ENCODE measurements at regions of chr6 and their contacts with region 1.

Region 1: GRCh38 chr6:44246663-44247337 is at the start of gene HSP90AB1:
- DNase-seq: peak; percentile 98
- H3K4me3 Mint-ChIP-seq: peak within 1 kb of the TSS; percentile 95
- H3K27ac Mint-ChIP-seq: peak within 1 kb of the TSS; percentile 99
- H3K4me1 Mint-ChIP-seq: peaks cover 35% of the 10 kb centered on the region
- H3K27me3 Mint-ChIP-seq: no peaks in the 10 kb centered on the region
- CTCF ChIP-seq: no peak
- total RNA-seq, gene HSP90AB1: 546 and 577 TPM in 2 replicates

Region 2: DNA sequence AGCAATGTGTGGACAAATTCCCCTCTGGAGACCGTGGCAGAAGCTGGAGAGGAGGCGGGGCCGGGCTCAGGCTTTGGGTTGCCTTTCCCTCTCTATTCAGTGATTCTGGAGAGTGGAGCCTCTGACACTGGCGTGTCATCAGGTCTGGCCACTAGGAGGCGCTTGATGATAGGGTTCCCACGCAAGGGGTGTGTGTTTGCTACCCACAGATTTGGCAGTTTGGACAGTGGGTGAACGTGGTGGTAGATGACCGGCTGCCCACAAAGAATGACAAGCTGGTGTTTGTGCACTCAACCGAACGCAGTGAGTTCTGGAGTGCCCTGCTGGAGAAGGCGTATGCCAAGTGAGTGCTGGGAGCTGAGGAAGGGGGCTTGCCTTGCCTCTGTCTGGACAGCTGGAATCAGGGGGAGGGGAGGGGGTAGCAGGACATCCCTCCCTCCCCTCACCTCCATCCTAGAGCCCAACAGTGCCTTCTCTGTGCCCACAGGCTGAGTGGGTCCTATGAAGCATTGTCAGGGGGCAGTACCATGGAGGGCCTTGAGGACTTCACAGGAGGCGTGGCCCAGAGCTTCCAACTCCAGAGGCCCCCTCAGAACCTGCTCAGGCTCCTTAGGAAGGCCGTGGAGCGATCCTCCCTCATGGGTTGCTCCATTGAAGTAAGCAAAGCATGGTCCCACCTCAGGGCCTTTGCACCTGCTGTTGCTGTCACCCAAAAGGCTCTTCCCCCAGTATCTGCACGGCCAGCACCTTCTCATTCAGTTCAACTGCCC is 73.9 kb before region 1 on chr6:
- CTCF ChIA-PET with region 1: interaction called, 10 read pairs
- POLR2A ChIA-PET with region 1: interaction called, 11 read pairs
- intact Hi-C with region 1: loop called (anchors 2 kb)
- DNase-seq: peak; percentile 84
- H3K4me3 Mint-ChIP-seq: no peak overlapping the region
- H3K27ac Mint-ChIP-seq: no peak overlapping the region
- H3K4me1 Mint-ChIP-seq: peaks cover 16% of the 10 kb centered on the region
- H3K27me3 Mint-ChIP-seq: no peaks in the 10 kb centered on the region
- CTCF ChIP-seq: peak; percentile 85

Region 3: DNA sequence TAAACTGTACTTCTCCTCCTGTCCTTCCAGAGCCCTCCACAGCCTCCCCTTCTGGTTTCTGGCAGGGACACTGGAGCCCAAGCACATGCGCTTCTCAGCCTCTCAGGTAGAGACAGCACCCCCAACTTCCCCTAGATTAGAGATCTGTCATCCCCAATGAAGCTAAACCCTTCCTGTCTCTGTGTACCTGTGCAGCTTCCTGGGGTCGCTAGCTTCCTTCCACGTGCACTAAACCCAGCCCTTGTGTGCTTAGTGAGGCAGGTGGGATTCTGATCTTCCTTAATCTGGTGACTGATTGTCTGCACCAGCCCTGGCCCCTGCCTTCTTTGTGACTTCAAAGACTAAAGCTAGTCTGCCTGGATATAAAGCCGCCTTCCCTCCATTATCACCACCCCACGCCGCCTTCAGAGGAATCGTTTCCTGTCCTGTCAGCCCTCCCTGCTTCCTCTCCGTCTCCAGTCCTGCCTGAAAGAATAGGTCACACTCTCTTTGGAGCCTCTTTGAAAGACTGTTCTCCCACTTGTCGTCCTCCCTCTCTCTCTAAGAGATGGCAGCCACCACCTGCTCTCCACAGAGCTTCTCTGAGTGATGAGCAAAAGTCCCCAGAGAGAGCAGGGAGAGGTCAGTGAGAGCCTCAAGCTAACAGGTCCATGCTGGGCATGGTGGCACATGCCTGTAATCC is 60.7 kb before region 1 on chr6:
- CTCF ChIA-PET with region 1: no interaction called
- POLR2A ChIA-PET with region 1: no interaction called
- intact Hi-C with region 1: no loop called
- DNase-seq: no peak
- H3K4me3 Mint-ChIP-seq: no peak overlapping the region
- H3K27ac Mint-ChIP-seq: no peak overlapping the region
- H3K4me1 Mint-ChIP-seq: no peaks in the 10 kb centered on the region
- H3K27me3 Mint-ChIP-seq: peaks cover 17% of the 10 kb centered on the region
- CTCF ChIP-seq: no peak

Region 4: GRCh38 chr6:44201638-44202303 is 45.0 kb before region 1 on chr6:
- CTCF ChIA-PET with region 1: interaction called, 5 read pairs
- POLR2A ChIA-PET with region 1: interaction called, 17 read pairs
- intact Hi-C with region 1: no loop called
- DNase-seq: peak; percentile 73
- H3K4me3 Mint-ChIP-seq: no peak overlapping the region
- H3K27ac Mint-ChIP-seq: peak overlapping the region; percentile 69
- H3K4me1 Mint-ChIP-seq: peaks cover 20% of the 10 kb centered on the region
- H3K27me3 Mint-ChIP-seq: no peaks in the 10 kb centered on the region
- CTCF ChIP-seq: no peak

Region 5: GRCh38 chr6:44221291-44221960 is 25.4 kb before region 1 on chr6:
- CTCF ChIA-PET with region 1: interaction called, 8 read pairs
- POLR2A ChIA-PET with region 1: interaction called, 62 read pairs
- intact Hi-C with region 1: no loop called
- DNase-seq: peak; percentile 96
- H3K4me3 Mint-ChIP-seq: peak overlapping the region; percentile 47
- H3K27ac Mint-ChIP-seq: peak overlapping the region; percentile 89
- H3K4me1 Mint-ChIP-seq: peaks cover 37% of the 10 kb centered on the region
- H3K27me3 Mint-ChIP-seq: no peaks in the 10 kb centered on the region
- CTCF ChIP-seq: peak; percentile 76

Region 6: DNA sequence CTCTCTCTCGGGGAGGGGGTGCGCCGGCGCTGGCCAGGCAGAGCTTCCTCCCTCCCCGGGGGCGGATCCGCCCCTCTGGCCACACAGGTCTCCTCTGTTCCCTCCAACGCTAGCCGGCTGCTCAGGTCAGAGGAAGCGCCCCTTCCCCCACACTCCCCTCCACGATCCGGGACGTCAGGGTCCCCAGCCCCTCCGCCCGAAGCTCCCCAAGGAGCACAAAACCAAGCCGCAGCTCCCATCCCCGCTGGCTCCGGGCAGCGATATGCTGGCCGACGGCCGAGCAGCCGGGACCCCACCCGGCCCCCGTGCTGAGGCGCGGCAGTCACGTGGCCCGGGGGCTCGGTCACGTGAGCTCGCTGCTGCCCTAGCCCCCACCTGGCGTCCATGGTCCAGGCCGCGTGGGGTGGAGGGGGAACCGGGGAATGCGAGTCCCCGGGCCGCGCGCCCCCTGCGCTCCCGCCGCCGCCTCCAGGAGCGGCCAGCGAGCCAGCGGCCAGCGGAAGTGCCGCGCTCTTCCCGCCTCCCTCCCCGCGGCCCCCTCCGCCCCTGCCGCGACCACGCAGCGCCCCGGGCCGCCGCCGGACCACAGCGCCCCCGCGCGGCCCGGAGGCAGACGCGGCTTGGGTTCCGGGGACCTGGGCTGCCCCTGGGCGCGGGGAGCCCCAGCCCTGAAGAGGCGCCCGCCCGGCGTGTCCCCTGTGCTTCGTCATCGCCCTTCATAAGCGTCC is 10.4 kb after region 1 on chr6 and contains the start of gene SLC35B2:
- CTCF ChIA-PET with region 1: interaction called, 14 read pairs
- POLR2A ChIA-PET with region 1: interaction called, 121 read pairs
- intact Hi-C with region 1: loop called (anchors 1 kb)
- DNase-seq: peak; percentile 47
- H3K4me3 Mint-ChIP-seq: peak within 1 kb of the TSS; percentile 84
- H3K27ac Mint-ChIP-seq: peak within 1 kb of the TSS; percentile 57
- H3K4me1 Mint-ChIP-seq: peaks cover 50% of the 10 kb centered on the region
- H3K27me3 Mint-ChIP-seq: no peaks in the 10 kb centered on the region
- CTCF ChIP-seq: peak; percentile 78
- total RNA-seq, gene SLC35B2: 27.1 and 31.3 TPM in 2 replicates

Region 7: DNA sequence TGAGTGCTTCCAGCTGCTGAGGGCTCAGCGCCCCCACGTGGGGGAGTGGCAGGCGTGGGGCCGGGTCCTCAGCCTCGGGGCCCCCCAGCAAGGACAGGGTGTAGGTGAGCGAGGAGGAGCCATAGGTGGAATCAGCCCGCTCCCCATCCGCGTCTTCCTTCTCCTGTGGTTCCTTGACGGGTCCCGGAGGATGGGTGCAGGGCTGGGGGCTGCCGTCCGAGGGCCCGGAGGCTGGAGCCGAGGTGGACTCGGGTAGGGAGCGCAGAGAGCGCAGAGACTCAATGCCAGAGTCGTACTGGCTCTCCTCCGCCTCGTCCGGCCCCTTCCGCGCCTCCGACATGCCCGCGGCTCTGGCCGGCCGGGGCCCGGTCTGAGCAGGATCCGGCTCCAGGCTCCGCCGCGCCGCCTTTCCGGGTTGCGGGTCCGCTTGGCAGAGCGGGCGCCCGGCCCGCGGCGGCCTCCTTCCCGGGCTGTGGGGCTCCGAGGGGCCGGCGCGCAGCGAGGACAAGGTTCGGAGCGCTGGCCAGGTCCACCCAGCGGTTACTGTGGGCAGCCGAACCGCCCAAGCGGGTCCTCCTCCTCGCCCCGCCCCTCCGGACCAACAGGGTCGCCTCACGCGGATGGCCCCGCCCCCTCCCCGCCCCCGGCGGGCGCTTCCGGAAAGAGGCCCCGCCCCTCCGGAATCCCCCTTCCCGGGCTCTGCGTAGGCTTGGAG is 18.4 kb after region 1 on chr6 and contains the start of gene NFKBIE:
- CTCF ChIA-PET with region 1: interaction called, 5 read pairs
- POLR2A ChIA-PET with region 1: interaction called, 25 read pairs
- intact Hi-C with region 1: no loop called
- DNase-seq: peak; percentile 92
- H3K4me3 Mint-ChIP-seq: peak within 1 kb of the TSS; percentile 91
- H3K27ac Mint-ChIP-seq: peak within 1 kb of the TSS; percentile 77
- H3K4me1 Mint-ChIP-seq: peaks cover 23% of the 10 kb centered on the region
- H3K27me3 Mint-ChIP-seq: peaks cover 9% of the 10 kb centered on the region
- CTCF ChIP-seq: no peak
- total RNA-seq, gene NFKBIE: 6.0 and 8.8 TPM in 2 replicates

Region 8: DNA sequence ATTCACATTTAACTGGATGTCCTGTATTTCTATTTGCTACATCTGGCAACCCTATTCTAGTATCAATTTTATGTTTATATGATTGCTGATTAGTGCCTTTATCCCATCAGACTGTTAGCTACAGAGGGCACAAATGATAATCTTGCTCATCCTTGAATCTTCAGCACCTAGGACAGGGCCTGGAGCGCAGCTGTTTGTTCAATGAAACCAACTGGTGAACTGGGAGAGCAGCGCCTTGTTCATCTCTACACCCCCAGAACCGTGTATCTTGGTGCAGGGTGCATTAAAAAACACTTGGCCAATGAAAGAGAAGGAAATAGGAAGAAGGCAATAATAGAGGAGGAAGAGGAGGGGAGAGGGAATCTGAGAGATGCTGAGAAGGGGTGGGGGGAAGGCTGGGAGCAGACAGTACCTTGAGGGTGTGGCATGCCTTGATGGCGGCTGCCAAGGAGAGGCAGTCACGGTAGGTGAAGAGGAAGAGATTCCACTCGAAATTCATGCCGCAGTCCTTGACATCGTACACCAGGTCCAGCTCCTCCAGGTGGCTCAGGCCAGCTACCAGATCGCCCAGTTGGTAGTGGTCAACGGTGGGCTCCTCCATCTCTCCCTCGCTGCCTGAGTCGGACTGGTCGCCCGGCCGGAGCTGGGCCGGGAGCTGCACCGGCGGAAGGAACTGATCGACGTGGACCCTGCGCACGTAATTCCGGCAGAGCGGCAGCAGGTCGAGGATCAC is 38.9 kb after region 1 on chr6:
- CTCF ChIA-PET with region 1: no interaction called
- POLR2A ChIA-PET with region 1: no interaction called
- intact Hi-C with region 1: no loop called
- DNase-seq: peak; percentile 39
- H3K4me3 Mint-ChIP-seq: no peak overlapping the region
- H3K27ac Mint-ChIP-seq: no peak overlapping the region
- H3K4me1 Mint-ChIP-seq: no peaks in the 10 kb centered on the region
- H3K27me3 Mint-ChIP-seq: peaks cover 75% of the 10 kb centered on the region
- CTCF ChIP-seq: no peak

Region 9: DNA sequence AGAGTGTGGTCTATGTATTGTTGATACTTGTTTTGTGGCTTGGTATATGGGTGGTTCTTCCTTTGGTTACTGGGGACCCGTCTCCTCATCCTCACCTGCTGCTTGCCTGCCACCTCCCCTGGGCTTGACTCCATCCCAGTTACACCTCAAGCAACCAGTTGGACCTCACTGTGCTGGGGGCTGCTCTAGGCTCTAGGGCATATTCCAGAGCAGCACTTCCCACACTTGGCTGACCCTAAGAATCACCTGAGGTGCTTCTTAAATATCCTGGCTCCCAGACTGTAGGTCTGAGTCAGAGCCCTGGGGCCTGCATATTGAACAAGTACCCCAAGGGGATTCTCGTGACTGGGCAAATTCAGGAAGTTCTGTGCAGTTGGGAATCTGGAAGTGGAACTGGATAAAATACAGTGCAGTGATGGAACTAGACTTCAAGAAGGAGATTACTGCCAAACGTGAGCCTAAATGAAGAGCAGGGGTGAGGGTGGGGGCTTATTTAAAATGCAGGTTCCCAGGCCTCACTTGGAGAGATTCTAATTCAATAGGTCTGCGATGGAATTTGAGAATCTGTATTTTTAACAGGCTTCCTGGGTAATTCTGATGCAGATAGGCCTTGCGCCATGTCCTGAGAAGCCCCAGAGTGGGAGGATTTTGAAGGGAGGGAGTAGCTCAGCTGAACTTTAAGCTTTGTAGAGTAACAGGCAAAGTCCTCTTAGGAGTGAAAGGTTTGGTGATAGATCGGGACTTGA is 103.3 kb after region 1 on chr6:
- CTCF ChIA-PET with region 1: no interaction called
- POLR2A ChIA-PET with region 1: no interaction called
- intact Hi-C with region 1: no loop called
- DNase-seq: no peak
- H3K4me3 Mint-ChIP-seq: no peak overlapping the region
- H3K27ac Mint-ChIP-seq: no peak overlapping the region
- H3K4me1 Mint-ChIP-seq: no peaks in the 10 kb centered on the region
- H3K27me3 Mint-ChIP-seq: peaks cover 3% of the 10 kb centered on the region
- CTCF ChIP-seq: no peak